ENCODE measurements at regions of chr2 and their contacts with region 1.

Region 1: GRCh38 chr2:73176881-73177644 is 25.3 kb upstream of the NOTO start:
- DNase-seq: peak; percentile 94 to 98
- ATAC-seq: peak; percentile 97
- H3K4me3 ChIP-seq: peak overlapping the region; percentile 2 to 8
- H3K27ac ChIP-seq: peak overlapping the region in 1 of 2 donors; percentile 28
- H3K4me1 ChIP-seq: no peaks in the 10 kb centered on the region
- H3K27me3 ChIP-seq: no peaks in the 10 kb centered on the region

Region 2: GRCh38 chr2:72770879-72771461 is 406.1 kb before region 1 on chr2:
- intact Hi-C with region 1: loop called in 1 of 2 experiments (anchors 10 kb)
- DNase-seq: no peak
- ATAC-seq: peak; percentile 68
- H3K4me3 ChIP-seq: no peak overlapping the region
- H3K27ac ChIP-seq: no peak overlapping the region
- H3K4me1 ChIP-seq: no peaks in the 10 kb centered on the region
- H3K27me3 ChIP-seq: no peaks in the 10 kb centered on the region

Region 3: GRCh38 chr2:73212448-73213176 is 35.5 kb after region 1 on chr2:
- intact Hi-C with region 1: loop called in 1 of 2 experiments (anchors 1 kb)
- DNase-seq: peak; percentile 83 to 90
- ATAC-seq: peak; percentile 90
- H3K4me3 ChIP-seq: no peak overlapping the region
- H3K27ac ChIP-seq: peak overlapping the region; percentile 38 to 85
- H3K4me1 ChIP-seq: no peaks in the 10 kb centered on the region
- H3K27me3 ChIP-seq: no peaks in the 10 kb centered on the region

Region 4: GRCh38 chr2:73233154-73233931 is 56.3 kb after region 1 on chr2 and contains the start of gene PRADC1:
- intact Hi-C with region 1: loop called in 1 of 2 experiments (anchors 2 kb)
- DNase-seq: peak; percentile 98 to 99
- ATAC-seq: peak; percentile 98
- H3K4me3 ChIP-seq: peak within 1 kb of the TSS; percentile 43 to 58
- H3K27ac ChIP-seq: peak within 1 kb of the TSS; percentile 12 to 78
- H3K4me1 ChIP-seq: no peaks in the 10 kb centered on the region
- H3K27me3 ChIP-seq: no peaks in the 10 kb centered on the region
- total RNA-seq, gene PRADC1: 12.4 to 15.9 TPM

Region 5: GRCh38 chr2:73243884-73244570 is 67.0 kb after region 1 on chr2:
- intact Hi-C with region 1: no loop called
- DNase-seq: peak in 1 of 2 donors; percentile 23
- ATAC-seq: no peak
- H3K4me3 ChIP-seq: no peak overlapping the region
- H3K27ac ChIP-seq: no peak overlapping the region
- H3K4me1 ChIP-seq: no peaks in the 10 kb centered on the region
- H3K27me3 ChIP-seq: no peaks in the 10 kb centered on the region

Region 6: GRCh38 chr2:73368781-73369180 is 191.7 kb after region 1 on chr2:
- intact Hi-C with region 1: no loop called
- DNase-seq: no peak
- ATAC-seq: no peak
- H3K4me3 ChIP-seq: no peak overlapping the region
- H3K27ac ChIP-seq: no peak overlapping the region
- H3K4me1 ChIP-seq: no peaks in the 10 kb centered on the region
- H3K27me3 ChIP-seq: peaks cover 0 to 2% of the 10 kb centered on the region in 2 donors